ENCODE measurements at regions of chr7 and their contacts with region 1.

Region 1: GRCh38 chr7:16645593-16646471 is at the starts of genes ANKMY2 and BZW2:
- DNase-seq: peak; percentile 97
- H3K4me3 ChIP-seq: peak within 1 kb of the TSS; percentile 92
- H3K4me3 Mint-ChIP-seq: peak within 1 kb of the TSS; percentile 98
- H3K27ac Mint-ChIP-seq: peak within 1 kb of the TSS; percentile 93
- H3K4me1 ChIP-seq: peaks cover 36% of the 10 kb centered on the region
- H3K4me1 Mint-ChIP-seq: peaks cover 39% of the 10 kb centered on the region
- H3K27me3 ChIP-seq: no peaks in the 10 kb centered on the region
- H3K27me3 Mint-ChIP-seq: no peaks in the 10 kb centered on the region
- CTCF ChIP-seq: no peak
- total RNA-seq, gene ANKMY2: 34.5 and 35.2 TPM in 2 replicates
- total RNA-seq, gene BZW2: 148 TPM in 2 replicates

Region 2: GRCh38 chr7:16594061-16594460 is 51.8 kb before region 1 on chr7:
- CTCF ChIA-PET with region 1: no interaction called
- POLR2A ChIA-PET with region 1: no interaction called
- intact Hi-C with region 1: no loop called
- DNase-seq: no peak
- H3K4me3 ChIP-seq: no peak overlapping the region
- H3K4me3 Mint-ChIP-seq: no peak overlapping the region
- H3K27ac Mint-ChIP-seq: no peak overlapping the region
- H3K4me1 ChIP-seq: peaks cover 45% of the 10 kb centered on the region
- H3K4me1 Mint-ChIP-seq: peaks cover 32% of the 10 kb centered on the region
- H3K27me3 ChIP-seq: no peaks in the 10 kb centered on the region
- H3K27me3 Mint-ChIP-seq: no peaks in the 10 kb centered on the region
- CTCF ChIP-seq: no peak

Region 3: GRCh38 chr7:16609842-16610450 is 35.9 kb before region 1 on chr7:
- CTCF ChIA-PET with region 1: no interaction called
- POLR2A ChIA-PET with region 1: no interaction called
- intact Hi-C with region 1: loop called (anchors 1 kb)
- DNase-seq: peak in 1 of 2 experiments; percentile 47
- H3K4me3 ChIP-seq: no peak overlapping the region
- H3K4me3 Mint-ChIP-seq: peak overlapping the region; percentile 58
- H3K27ac Mint-ChIP-seq: peak overlapping the region; percentile 79
- H3K4me1 ChIP-seq: peaks cover 40% of the 10 kb centered on the region
- H3K4me1 Mint-ChIP-seq: peaks cover 44% of the 10 kb centered on the region
- H3K27me3 ChIP-seq: no peaks in the 10 kb centered on the region
- H3K27me3 Mint-ChIP-seq: no peaks in the 10 kb centered on the region
- CTCF ChIP-seq: no peak

Region 4: DNA sequence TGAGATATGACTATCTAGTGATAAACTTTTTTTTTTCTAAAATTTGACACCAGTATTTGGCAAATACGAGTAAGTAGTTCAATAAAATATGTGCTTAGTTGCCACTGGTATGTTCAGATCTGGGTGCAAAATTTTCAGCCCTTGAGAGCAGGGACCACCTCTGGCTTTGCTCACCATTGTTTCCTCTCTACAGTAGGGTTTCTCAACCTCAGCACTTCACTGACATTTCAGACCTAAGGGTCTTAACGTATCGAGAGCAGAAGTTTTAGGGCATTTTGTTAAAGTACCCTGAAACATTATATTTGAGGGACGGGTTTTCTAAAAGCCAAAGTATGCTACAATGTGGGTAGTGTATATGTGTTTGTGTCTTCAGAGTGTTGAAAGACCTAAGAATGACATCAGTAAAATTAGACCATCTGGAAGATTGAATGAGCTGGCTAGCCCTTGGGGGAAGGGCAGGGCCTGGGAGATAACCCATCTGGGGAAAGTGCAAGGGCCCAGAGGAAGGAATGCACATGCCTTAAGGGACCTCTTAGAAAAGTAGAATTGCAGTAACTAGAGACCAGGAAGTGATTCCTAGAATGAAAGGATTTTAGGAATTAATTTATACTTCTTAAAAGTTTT is 11.9 kb after region 1 on chr7:
- CTCF ChIA-PET with region 1: no interaction called
- POLR2A ChIA-PET with region 1: no interaction called
- intact Hi-C with region 1: loop called (anchors 1 kb)
- DNase-seq: peak; percentile 79 to 89
- H3K4me3 ChIP-seq: no peak overlapping the region
- H3K4me3 Mint-ChIP-seq: peak overlapping the region; percentile 3
- H3K27ac Mint-ChIP-seq: peak overlapping the region; percentile 58
- H3K4me1 ChIP-seq: peaks cover 69% of the 10 kb centered on the region
- H3K4me1 Mint-ChIP-seq: peaks cover 36% of the 10 kb centered on the region
- H3K27me3 ChIP-seq: no peaks in the 10 kb centered on the region
- H3K27me3 Mint-ChIP-seq: no peaks in the 10 kb centered on the region
- CTCF ChIP-seq: peak in 1 of 2 experiments; percentile 9

Region 5: GRCh38 chr7:16668049-16668858 is 22.4 kb after region 1 on chr7:
- CTCF ChIA-PET with region 1: interaction called, 4 read pairs
- POLR2A ChIA-PET with region 1: interaction called, 13 read pairs
- intact Hi-C with region 1: loop called (anchors 1 kb)
- DNase-seq: peak; percentile 87 to 91
- H3K4me3 ChIP-seq: no peak overlapping the region
- H3K4me3 Mint-ChIP-seq: peak overlapping the region; percentile 58
- H3K27ac Mint-ChIP-seq: peak overlapping the region; percentile 90
- H3K4me1 ChIP-seq: peaks cover 43% of the 10 kb centered on the region
- H3K4me1 Mint-ChIP-seq: peaks cover 56% of the 10 kb centered on the region
- H3K27me3 ChIP-seq: no peaks in the 10 kb centered on the region
- H3K27me3 Mint-ChIP-seq: no peaks in the 10 kb centered on the region
- CTCF ChIP-seq: no peak

Region 6: GRCh38 chr7:16678045-16678444 is 32.2 kb after region 1 on chr7:
- CTCF ChIA-PET with region 1: no interaction called
- POLR2A ChIA-PET with region 1: no interaction called
- intact Hi-C with region 1: loop called (anchors 2 kb)
- DNase-seq: no peak
- H3K4me3 ChIP-seq: no peak overlapping the region
- H3K4me3 Mint-ChIP-seq: no peak overlapping the region
- H3K27ac Mint-ChIP-seq: no peak overlapping the region
- H3K4me1 ChIP-seq: peaks cover 22% of the 10 kb centered on the region
- H3K4me1 Mint-ChIP-seq: peaks cover 37% of the 10 kb centered on the region
- H3K27me3 ChIP-seq: no peaks in the 10 kb centered on the region
- H3K27me3 Mint-ChIP-seq: no peaks in the 10 kb centered on the region
- CTCF ChIP-seq: no peak